WTC11 (cell line): ENCODE measurements at regions of chr15 and their contacts with region 1.

Region 1: GRCh38 chr15:71485099-71485693 is 325.2 kb upstream of the NR2E3 start:
- DNase-seq: peak; percentile 28
- ATAC-seq: peak; percentile 90
- H3K4me3 Mint-ChIP-seq: no peak overlapping the region
- H3K27ac Mint-ChIP-seq: no peak overlapping the region
- H3K4me1 Mint-ChIP-seq: no peaks in the 10 kb centered on the region
- H3K27me3 Mint-ChIP-seq: no peaks in the 10 kb centered on the region
- CTCF ChIP-seq: no peak; the same call in 1 of the 2 replicates

Region 2: GRCh38 chr15:71386448-71387236 is 98.6 kb before region 1 on chr15:
- CTCF ChIA-PET with region 1: no interaction called
- POLR2A ChIA-PET with region 1: no interaction called
- DNase-seq: no peak
- ATAC-seq: peak; percentile 90
- H3K4me3 Mint-ChIP-seq: peak overlapping the region; percentile 49
- H3K27ac Mint-ChIP-seq: peak overlapping the region; percentile 99
- H3K4me1 Mint-ChIP-seq: peaks cover 72% of the 10 kb centered on the region
- H3K27me3 Mint-ChIP-seq: peaks cover 9% of the 10 kb centered on the region; the same call in 1 of the 2 replicates
- CTCF ChIP-seq: no peak

Region 3: GRCh38 chr15:71465131-71465530 is 20.1 kb before region 1 on chr15:
- CTCF ChIA-PET with region 1: interaction called, 11 read pairs
- POLR2A ChIA-PET with region 1: no interaction called
- DNase-seq: no peak
- ATAC-seq: no peak; the same call in 1 of the 2 replicates
- H3K4me3 Mint-ChIP-seq: no peak overlapping the region
- H3K27ac Mint-ChIP-seq: no peak overlapping the region; the same call in 1 of the 2 replicates
- H3K4me1 Mint-ChIP-seq: peaks cover 19% of the 10 kb centered on the region
- H3K27me3 Mint-ChIP-seq: no peaks in the 10 kb centered on the region
- CTCF ChIP-seq: no peak

Region 4: DNA sequence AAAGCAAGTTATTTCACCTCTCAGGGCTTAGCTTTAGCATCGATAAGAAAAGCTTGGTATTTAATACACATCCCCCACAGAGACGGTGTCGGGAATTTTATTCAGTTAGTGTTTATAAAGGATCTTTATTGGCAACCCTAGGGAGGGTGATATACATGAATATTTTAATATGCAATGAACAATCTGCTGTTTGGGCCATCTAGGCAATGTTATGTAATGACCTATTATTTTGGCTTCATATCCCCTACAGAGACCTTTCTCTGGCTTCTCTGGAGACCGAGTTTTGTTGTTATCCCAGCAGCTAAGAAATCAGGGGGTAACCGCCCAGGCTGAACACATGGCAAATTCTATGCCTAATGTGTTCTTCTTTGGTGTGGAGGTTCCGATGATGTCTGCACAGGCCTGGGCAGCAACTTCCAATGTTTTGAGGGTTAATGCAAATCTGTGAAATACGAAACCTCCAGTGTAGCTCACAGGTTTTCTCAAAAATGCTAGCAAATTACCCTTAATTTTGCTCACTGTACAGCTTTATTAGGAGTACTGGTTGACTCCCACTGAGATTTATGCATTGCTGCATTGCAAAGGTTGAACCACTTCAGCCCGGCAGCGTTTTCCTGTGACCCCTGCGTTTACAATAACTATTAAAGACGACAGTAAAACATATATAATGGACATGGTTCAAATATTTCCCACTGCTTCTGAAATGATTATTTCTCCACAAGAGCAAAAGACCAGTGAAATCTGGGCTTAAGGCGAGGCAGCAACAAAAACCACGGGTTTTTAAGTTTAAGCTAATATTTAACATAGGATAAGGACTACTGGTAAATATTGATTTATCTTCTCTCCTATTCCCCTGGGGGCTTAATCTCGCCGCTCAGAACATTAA is 26.8 kb after region 1 on chr15:
- CTCF ChIA-PET with region 1: interaction called, 16 read pairs
- POLR2A ChIA-PET with region 1: no interaction called
- DNase-seq: no peak
- ATAC-seq: no peak
- H3K4me3 Mint-ChIP-seq: no peak overlapping the region
- H3K27ac Mint-ChIP-seq: no peak overlapping the region
- H3K4me1 Mint-ChIP-seq: peaks cover 19% of the 10 kb centered on the region
- H3K27me3 Mint-ChIP-seq: no peaks in the 10 kb centered on the region
- CTCF ChIP-seq: no peak